Gastrocnemius medialis (tissue), 4 donors: ENCODE measurements at regions of chr3 and their contacts with region 1.

Region 1: GRCh38 chr3:15268033-15268631 is 62.1 kb downstream of the CAPN7 start:
- DNase-seq: peak; percentile 74 to 85
- ATAC-seq: peak; percentile 75 to 82
- H3K4me3 ChIP-seq: peak overlapping the region in 1 of 4 donors; percentile 1
- H3K27ac ChIP-seq: peak overlapping the region; percentile 73 to 81 (median 74)
- H3K4me1 ChIP-seq: peaks cover 46 to 57% of the 10 kb centered on the region in 2 donors
- H3K27me3 ChIP-seq: no peaks in the 10 kb centered on the region
- CTCF ChIP-seq: peak; percentile 94 to 97 (median 96)
- POLR2A ChIP-seq: no peak

Region 2: GRCh38 chr3:15332405-15333098 is 64.4 kb after region 1 on chr3 and contains the start of gene SH3BP5:
- in situ Hi-C with region 1: loop called (anchors 5 to 10 kb)
- intact Hi-C with region 1: loop called (anchors 1 kb)
- DNase-seq: peak; percentile 52 to 66
- ATAC-seq: peak; percentile 63 to 66
- H3K4me3 ChIP-seq: peak within 1 kb of the TSS; percentile 92 to 97 (median 93)
- H3K27ac ChIP-seq: peak within 1 kb of the TSS; percentile 88 to 93 (median 91)
- H3K4me1 ChIP-seq: peaks cover 38 to 40% of the 10 kb centered on the region in 2 donors
- H3K27me3 ChIP-seq: no peaks in the 10 kb centered on the region
- CTCF ChIP-seq: peak; percentile 73 to 95 (median 91)
- POLR2A ChIP-seq: peak; percentile 89 to 91
- total RNA-seq, gene SH3BP5: 31.5 to 111 (median 75.5) TPM

Region 3: GRCh38 chr3:15339786-15340215 is 71.7 kb after region 1 on chr3:
- in situ Hi-C with region 1: loop called in 2 of 4 experiments (anchors 5 to 10 kb)
- intact Hi-C with region 1: no loop called
- DNase-seq: no peak
- ATAC-seq: peak; percentile 55 to 64
- H3K4me3 ChIP-seq: no peak overlapping the region
- H3K27ac ChIP-seq: no peak overlapping the region
- H3K4me1 ChIP-seq: peaks cover 3 to 7% of the 10 kb centered on the region in 2 donors
- H3K27me3 ChIP-seq: no peaks in the 10 kb centered on the region
- CTCF ChIP-seq: no peak
- POLR2A ChIP-seq: no peak

Region 4: DNA sequence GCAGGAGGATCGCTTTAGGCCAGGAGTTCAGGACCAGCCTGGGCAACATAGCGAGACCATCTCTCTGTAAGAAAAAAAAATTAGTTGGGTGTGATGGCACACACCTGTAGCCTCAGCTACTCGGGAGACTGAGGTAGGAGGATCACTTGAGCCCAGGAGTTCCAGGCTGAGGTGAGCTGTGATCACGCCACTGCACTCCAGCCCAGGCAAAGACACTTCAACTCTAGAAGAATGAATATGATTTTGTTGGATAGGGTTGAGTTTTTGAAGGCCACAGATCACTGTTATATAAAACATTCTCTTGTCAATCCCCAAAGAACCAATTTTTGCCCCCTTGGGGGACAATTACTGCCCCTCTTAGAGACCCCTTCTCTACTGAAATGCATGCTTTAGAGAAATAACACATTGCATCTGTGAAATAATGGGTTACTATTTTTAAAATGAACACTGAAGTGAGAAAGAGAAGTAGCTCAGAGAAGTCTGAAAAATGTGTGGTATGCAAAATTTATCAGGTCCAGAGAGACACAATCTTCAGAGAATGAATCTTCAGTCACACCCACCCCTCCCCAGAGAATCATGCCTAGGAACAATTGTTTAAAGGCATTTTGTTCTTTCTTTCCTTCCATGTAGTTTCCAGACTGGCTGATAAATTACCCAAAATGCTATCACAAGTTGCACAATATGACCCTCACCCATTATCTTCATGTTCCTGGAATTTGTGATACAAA is 116.5 kb after region 1 on chr3:
- in situ Hi-C with region 1: loop called (anchors 5 to 10 kb)
- intact Hi-C with region 1: no loop called
- DNase-seq: no peak
- ATAC-seq: no peak
- H3K4me3 ChIP-seq: no peak overlapping the region
- H3K27ac ChIP-seq: no peak overlapping the region
- H3K4me1 ChIP-seq: peaks cover 0 to 4% of the 10 kb centered on the region in 2 donors
- H3K27me3 ChIP-seq: no peaks in the 10 kb centered on the region
- CTCF ChIP-seq: no peak
- POLR2A ChIP-seq: no peak